Testis (tissue), 5 donors: ENCODE measurements at regions of chr2 and their contacts with region 1.

Region 1: GRCh38 chr2:43905371-43905803 is 66.6 kb downstream of the ABCG8 start:
- DNase-seq: no peak
- H3K4me3 ChIP-seq: no peak overlapping the region
- H3K27ac ChIP-seq: no peak overlapping the region
- H3K4me1 ChIP-seq: no peaks in the 10 kb centered on the region
- H3K27me3 ChIP-seq: no peaks in the 10 kb centered on the region
- CTCF ChIP-seq: no peak
- POLR2A ChIP-seq: no peak

Region 2: GRCh38 chr2:44420725-44421124 is 515.3 kb after region 1 on chr2:
- intact Hi-C with region 1: loop called (anchors 10 kb)
- DNase-seq: no peak
- H3K4me3 ChIP-seq: no peak overlapping the region
- H3K27ac ChIP-seq: no peak overlapping the region
- H3K4me1 ChIP-seq: no peaks in the 10 kb centered on the region
- H3K27me3 ChIP-seq: no peaks in the 10 kb centered on the region
- CTCF ChIP-seq: no peak
- POLR2A ChIP-seq: no peak